Vagina (tissue), 2 donors: ENCODE measurements at regions of chr2 and their contacts with region 1.

Region 1: DNA sequence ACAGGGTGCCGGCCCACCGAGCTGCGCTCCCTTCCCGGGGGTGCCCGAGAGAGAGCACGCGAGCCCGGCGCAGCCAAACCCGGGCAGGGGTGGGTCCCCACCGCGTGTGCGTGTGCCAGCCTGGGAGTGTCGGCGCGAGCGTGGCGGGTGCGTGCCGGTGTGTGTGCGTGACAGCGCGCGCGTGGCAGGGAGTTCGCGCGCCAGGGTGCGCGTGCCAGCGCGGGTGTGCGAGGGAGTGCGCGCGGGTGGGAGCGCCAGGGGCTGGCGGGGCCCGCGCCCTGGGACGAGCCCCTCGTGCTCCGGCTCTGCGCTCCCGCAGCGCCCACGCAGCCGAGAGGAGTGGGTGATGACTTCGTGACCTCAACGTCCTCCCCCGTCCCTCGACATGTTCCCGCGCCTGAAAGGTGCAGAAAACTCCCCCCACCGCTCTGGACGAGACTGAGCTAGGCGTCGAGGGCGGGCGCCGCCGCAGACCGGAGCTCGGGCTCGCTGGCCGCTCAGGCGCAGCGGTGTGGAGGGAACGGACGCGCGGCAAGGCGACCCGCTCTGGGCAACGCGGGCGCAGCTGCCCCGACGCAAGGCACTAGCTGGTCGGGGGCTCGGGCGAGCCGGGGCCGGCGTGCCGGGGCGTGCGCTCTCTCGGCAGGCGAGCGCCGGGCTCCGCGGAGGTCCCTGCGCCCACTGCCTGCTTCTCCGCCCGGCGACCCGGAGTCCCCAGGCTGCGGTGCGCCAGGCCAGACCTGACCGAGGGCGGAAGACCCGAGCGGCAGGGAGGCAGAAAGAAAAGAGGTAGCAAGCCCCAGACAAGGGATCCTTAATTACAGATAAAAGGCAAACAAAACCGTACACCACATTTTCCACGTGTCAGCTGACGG is 582.8 kb downstream of the ZEB2 start:
- DNase-seq: no peak
- H3K4me3 ChIP-seq: peak overlapping the region; percentile 51 to 66
- H3K27ac ChIP-seq: peak overlapping the region; percentile 90
- H3K4me1 ChIP-seq: peaks cover 19% of the 10 kb centered on the region
- H3K27me3 ChIP-seq: no peaks in the 10 kb centered on the region
- CTCF ChIP-seq: no peak
- POLR2A ChIP-seq: no peak

Region 2: GRCh38 chr2:143357966-143358365 is 579.1 kb before region 1 on chr2:
- intact Hi-C with region 1: no loop called
- DNase-seq: no peak
- H3K4me3 ChIP-seq: no peak overlapping the region
- H3K27ac ChIP-seq: no peak overlapping the region
- H3K4me1 ChIP-seq: no peaks in the 10 kb centered on the region
- H3K27me3 ChIP-seq: no peaks in the 10 kb centered on the region
- CTCF ChIP-seq: no peak
- POLR2A ChIP-seq: no peak

Region 3: DNA sequence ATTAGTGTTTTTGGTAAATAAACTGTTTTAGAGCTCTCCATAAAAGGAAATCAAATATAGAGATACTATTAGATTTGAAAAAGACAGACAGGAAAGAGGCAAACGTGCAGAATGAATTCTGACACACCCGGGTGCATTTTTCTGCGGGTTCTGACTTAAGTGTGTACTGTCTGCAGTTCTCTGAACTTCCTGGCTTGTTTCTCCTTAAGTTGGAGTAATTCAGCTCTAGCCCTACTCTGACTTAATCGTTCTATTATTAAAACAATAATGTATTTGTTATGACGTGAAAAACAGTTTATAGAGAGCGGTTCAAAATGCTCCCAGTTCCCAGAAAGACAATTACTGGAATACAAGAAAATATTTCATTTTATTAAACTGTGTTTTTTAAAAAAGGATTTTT is 502.0 kb before region 1 on chr2:
- intact Hi-C with region 1: loop called (anchors 5 kb)
- DNase-seq: no peak
- H3K4me3 ChIP-seq: no peak overlapping the region
- H3K27ac ChIP-seq: no peak overlapping the region
- H3K4me1 ChIP-seq: no peaks in the 10 kb centered on the region
- H3K27me3 ChIP-seq: no peaks in the 10 kb centered on the region
- CTCF ChIP-seq: no peak
- POLR2A ChIP-seq: no peak

Region 4: DNA sequence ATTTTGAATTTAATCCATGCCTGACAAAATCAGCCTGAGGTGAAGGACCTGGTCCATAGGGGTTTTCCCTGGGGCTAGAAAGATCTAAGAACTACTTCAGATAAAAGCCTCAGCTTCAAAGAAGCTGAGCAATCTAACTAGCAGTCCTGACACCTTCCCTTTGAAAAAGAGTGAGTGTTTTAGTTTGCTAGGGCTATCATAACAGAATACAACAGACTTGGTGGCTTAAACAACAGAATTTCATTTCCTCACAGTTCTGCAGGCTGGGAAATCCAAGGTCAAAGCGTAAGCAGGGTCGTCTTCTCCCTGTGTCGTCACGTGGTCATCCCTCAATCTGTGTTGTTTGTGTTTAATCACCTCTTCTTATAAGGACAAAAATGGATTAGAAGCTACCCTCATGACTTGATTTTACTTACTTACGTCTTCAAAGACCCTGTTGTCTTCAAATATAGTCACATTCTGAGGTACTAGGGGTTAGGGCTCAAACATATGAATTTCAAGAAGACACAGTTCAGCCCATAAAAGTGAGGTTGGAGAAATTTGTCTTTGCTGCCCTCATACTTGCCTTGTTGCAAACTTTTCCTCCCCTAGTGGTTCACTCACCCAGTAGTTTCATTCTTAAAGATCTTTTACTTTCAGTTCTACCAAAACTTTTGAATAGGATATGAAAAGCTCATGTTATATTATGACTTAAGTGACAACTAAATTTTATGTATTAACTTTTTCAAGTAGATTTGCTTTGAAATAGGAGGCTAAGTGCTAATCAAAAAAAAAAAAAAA is 134.0 kb before region 1 on chr2:
- intact Hi-C with region 1: no loop called
- DNase-seq: no peak
- H3K4me3 ChIP-seq: no peak overlapping the region
- H3K27ac ChIP-seq: no peak overlapping the region
- H3K4me1 ChIP-seq: no peaks in the 10 kb centered on the region
- H3K27me3 ChIP-seq: no peaks in the 10 kb centered on the region
- CTCF ChIP-seq: no peak
- POLR2A ChIP-seq: no peak